ENCODE measurements at regions of chr6 and their contacts with region 1.

Region 1: DNA sequence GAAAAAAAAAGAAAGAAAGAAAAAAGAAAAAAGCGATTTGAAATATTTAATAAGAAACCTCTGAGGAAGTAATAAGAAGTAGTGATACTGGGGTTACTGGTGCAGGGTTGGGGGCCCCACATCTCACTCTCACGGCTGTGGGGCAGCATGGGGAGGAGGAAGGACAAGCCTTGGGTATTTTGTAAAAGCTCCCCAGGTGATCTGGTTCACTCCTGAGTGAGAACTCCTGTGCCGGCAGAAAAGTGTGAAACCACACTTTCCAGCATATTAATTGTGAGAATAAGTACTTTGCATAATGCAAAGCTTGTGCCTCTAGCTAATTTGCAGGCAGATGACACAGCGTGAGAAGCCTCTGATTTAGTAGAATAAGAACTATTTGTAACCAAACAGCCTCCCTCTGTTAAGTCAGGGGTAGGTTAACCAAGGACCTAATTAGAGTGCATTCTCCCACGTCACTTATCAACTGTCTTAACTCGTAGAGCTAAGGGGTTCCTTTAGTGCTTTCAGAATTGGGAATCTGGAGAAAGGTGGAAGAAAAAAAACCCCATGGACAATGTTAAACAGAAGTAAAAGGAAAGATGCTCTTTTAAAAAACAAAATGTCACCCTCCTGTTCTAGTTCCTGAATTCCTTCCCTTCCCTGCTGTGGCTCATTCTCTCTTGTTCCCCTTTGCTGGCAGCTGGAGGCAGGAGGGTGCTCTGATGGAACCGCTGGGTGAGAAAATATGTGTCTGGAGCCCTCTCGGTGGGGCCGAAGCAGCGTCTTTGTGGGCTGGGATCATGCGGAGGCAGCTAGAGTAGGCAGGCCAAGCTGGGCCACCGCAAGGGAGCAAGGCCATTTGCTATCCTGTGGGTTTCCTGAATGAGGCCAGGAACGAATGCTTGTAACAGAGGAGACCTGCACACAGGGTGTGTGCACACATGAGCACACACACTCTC is 108.7 kb downstream of the FYN start:
- DNase-seq: peak; percentile 80
- H3K4me3 Mint-ChIP-seq: peak overlapping the region; percentile 59
- H3K27ac Mint-ChIP-seq: peak overlapping the region; percentile 95
- H3K4me1 Mint-ChIP-seq: peaks cover 98% of the 10 kb centered on the region
- H3K27me3 Mint-ChIP-seq: no peaks in the 10 kb centered on the region

Region 2: GRCh38 chr6:111750753-111751684 is 13.5 kb before region 1 on chr6:
- CTCF ChIA-PET with region 1: interaction called, 5 read pairs
- POLR2A ChIA-PET with region 1: interaction called, 17 read pairs
- intact Hi-C with region 1: loop called (anchors 2 kb)
- DNase-seq: peak; percentile 71
- H3K4me3 Mint-ChIP-seq: peak overlapping the region; percentile 59
- H3K27ac Mint-ChIP-seq: peak overlapping the region; percentile 95
- H3K4me1 Mint-ChIP-seq: peaks cover 93% of the 10 kb centered on the region
- H3K27me3 Mint-ChIP-seq: no peaks in the 10 kb centered on the region

Region 3: GRCh38 chr6:111804627-111805235 is 40.2 kb after region 1 on chr6:
- CTCF ChIA-PET with region 1: interaction called, 28 read pairs
- POLR2A ChIA-PET with region 1: interaction called, 28 read pairs
- intact Hi-C with region 1: loop called (anchors 1 kb)
- DNase-seq: peak; percentile 86
- H3K4me3 Mint-ChIP-seq: peak overlapping the region; percentile 59
- H3K27ac Mint-ChIP-seq: peak overlapping the region; percentile 91
- H3K4me1 Mint-ChIP-seq: peaks cover 94% of the 10 kb centered on the region
- H3K27me3 Mint-ChIP-seq: no peaks in the 10 kb centered on the region

Region 4: DNA sequence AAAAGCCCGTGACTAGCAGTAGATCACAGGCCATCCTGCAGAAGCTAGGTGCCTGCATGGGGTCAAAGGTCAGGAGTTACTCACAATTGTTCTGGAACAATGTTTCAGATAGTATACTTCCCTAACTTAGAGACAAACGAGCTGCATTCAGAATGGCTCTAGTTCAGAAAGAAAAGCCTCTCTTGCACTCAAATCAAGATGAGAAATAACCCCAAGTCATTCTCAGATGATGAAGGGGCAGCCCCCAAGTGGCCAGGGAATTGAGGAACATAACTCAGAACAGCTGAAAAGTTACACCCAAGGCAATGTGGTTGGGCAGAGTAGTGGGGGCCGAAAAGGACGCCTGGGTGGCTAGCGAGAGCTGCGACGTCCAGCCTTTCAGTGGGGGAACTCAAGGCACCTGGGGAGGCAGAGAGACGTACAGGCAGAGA is 80.9 kb after region 1 on chr6:
- CTCF ChIA-PET with region 1: interaction called, 5 read pairs
- POLR2A ChIA-PET with region 1: interaction called, 16 read pairs
- intact Hi-C with region 1: no loop called
- DNase-seq: peak; percentile 56
- H3K4me3 Mint-ChIP-seq: peak overlapping the region; percentile 14
- H3K27ac Mint-ChIP-seq: peak overlapping the region; percentile 86
- H3K4me1 Mint-ChIP-seq: peaks cover 62% of the 10 kb centered on the region
- H3K27me3 Mint-ChIP-seq: no peaks in the 10 kb centered on the region

Region 5: GRCh38 chr6:111973118-111973761 is 208.7 kb after region 1 on chr6:
- CTCF ChIA-PET with region 1: interaction called, 3 read pairs
- POLR2A ChIA-PET with region 1: interaction called, 10 read pairs
- intact Hi-C with region 1: loop called (anchors 1 kb)
- DNase-seq: peak; percentile 81
- H3K4me3 Mint-ChIP-seq: peak overlapping the region; percentile 59
- H3K27ac Mint-ChIP-seq: peak overlapping the region; percentile 89
- H3K4me1 Mint-ChIP-seq: peaks cover 63% of the 10 kb centered on the region
- H3K27me3 Mint-ChIP-seq: no peaks in the 10 kb centered on the region

Region 6: DNA sequence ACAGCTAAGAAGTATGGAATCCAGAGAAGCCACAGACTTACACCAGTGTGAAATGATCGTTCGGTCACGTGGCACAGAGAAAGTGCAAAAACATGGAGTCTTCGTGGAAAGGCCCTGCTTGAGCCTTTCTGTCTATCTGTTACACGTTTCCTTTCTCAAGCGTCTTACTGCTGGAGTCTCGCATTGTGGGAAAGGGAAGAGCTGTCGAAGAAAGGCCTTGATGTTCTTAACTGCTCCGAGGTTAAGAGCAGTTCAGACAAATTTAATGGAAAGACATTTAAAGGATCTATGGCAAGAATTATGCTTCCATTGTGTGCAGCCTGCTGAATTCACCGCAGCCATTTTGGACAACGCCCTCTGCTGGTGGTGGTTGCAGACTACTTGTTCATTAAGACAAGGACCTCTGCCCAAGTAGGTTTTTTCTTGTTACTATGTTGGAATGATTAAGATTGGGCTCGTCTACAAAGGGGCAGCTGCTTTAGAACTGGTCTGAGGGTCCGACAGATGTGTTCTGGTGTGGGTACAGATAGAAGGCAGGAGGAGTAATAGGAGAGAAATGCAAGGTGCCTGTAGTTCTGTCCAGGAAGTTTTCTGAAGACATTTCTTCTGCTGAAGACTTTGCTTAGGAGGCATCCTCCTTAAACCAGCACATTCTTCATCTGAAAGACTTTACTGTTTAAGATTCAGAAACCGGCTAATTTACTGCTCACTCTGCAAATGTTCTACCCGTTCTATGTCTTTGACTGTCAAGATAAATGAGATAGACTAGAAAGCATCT is 264.7 kb after region 1 on chr6:
- CTCF ChIA-PET with region 1: interaction called, 4 read pairs
- POLR2A ChIA-PET with region 1: no interaction called
- intact Hi-C with region 1: loop called (anchors 2 kb)
- DNase-seq: peak; percentile 86
- H3K4me3 Mint-ChIP-seq: no peak overlapping the region
- H3K27ac Mint-ChIP-seq: peak overlapping the region; percentile 89
- H3K4me1 Mint-ChIP-seq: peaks cover 70% of the 10 kb centered on the region
- H3K27me3 Mint-ChIP-seq: no peaks in the 10 kb centered on the region